ENCODE measurements at regions of chr4 and their contacts with region 1.

Region 1: GRCh38 chr4:88211473-88212252 is 53.2 kb upstream of the ABCG2 start:
- DNase-seq: peak; percentile 45
- H3K4me3 ChIP-seq: no peak overlapping the region
- H3K27ac ChIP-seq: no peak overlapping the region
- H3K4me1 ChIP-seq: no peaks in the 10 kb centered on the region
- H3K27me3 ChIP-seq: no peaks in the 10 kb centered on the region
- CTCF ChIP-seq: peak; percentile 59 to 66

Region 2: DNA sequence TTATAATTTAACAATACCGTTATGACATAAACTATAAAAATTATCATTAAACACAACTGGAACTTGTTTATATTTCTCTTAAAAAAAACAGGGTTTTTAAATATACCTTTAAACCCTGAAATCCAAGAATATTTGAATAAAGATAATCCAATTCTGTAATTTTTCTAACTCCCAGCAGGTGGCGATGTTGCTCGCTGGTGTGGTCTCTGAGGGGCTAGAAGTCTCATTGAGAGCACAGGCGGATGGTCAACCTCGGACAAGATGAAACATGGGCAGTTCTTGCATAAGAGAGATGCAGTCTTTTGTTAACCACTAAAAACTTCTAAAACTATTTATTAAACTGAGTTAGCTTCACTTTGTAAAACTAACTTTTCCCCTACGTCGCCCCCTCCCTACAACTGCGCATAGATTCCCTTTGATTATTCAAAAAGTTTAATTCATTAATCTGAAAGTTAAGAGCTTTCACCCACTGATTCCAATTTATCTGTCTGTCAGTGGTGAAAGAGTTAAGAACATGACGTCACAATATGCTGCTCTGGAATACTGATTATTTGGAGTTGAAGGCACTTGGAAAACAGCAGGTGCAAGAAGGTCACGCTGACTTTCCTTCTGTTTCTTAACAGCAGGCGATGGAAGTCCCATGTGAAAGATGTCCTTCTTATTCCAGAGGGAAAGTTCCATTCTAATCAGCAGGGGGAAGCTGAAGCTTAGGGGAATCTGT is 532.1 kb before region 1 on chr4:
- CTCF ChIA-PET with region 1: no interaction called
- dilution Hi-C with region 1: no loop called
- in situ Hi-C with region 1: no loop called
- intact Hi-C with region 1: loop called (anchors 10 kb)
- DNase-seq: peak; percentile 3
- H3K4me3 ChIP-seq: no peak overlapping the region
- H3K27ac ChIP-seq: no peak overlapping the region
- H3K4me1 ChIP-seq: no peaks in the 10 kb centered on the region
- H3K27me3 ChIP-seq: no peaks in the 10 kb centered on the region
- CTCF ChIP-seq: peak; percentile 73 to 79

Region 3: GRCh38 chr4:87973283-87974169 is 238.1 kb before region 1 on chr4:
- CTCF ChIA-PET with region 1: interaction called, 8 read pairs
- dilution Hi-C with region 1: no loop called
- in situ Hi-C with region 1: no loop called
- intact Hi-C with region 1: loop called (anchors 5 kb)
- DNase-seq: peak; percentile 79
- H3K4me3 ChIP-seq: peak overlapping the region; percentile 12 to 30 (median 23)
- H3K27ac ChIP-seq: peak overlapping the region; percentile 41
- H3K4me1 ChIP-seq: peaks cover 17% of the 10 kb centered on the region
- H3K27me3 ChIP-seq: no peaks in the 10 kb centered on the region
- CTCF ChIP-seq: peak; percentile 75 to 82

Region 4: DNA sequence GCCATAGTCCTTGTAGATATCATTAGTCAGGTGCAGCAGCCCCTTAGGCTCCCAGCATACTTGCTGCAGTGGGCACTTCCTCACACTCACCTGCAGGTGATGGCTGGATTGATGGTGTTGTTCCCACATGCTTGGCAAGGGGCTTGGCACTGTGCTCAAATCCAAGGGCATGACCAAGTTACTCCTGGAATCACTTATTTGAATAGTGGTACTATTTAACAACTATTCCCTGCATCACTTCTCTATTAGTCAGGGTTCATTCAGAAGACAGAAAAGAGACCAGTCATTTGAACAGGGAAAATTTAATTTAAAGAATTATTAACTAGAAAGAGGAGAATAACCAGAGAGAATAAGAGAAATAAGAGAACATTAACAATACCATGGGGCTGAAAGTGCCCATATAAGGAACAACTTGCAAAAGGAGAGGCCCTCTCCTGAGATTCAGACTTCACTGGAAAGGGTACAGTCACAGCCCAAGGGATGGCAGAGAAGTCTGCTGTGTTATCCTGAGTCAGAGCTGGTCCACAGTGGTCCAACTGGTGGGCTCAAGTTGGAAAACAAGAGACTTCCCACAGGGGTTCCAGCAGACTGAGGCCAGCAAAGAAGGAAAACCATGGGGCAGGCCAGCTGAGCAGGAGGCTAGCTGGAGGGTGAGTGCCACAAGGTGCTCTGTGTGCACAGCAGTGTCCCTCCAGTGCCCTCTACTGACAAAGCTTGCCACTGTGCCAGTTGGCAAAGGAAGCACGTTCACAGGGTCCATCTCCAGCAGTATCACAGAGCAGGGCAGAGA is 226.4 kb before region 1 on chr4:
- CTCF ChIA-PET with region 1: no interaction called
- dilution Hi-C with region 1: no loop called
- in situ Hi-C with region 1: no loop called
- intact Hi-C with region 1: loop called (anchors 1 kb)
- DNase-seq: peak; percentile 57
- H3K4me3 ChIP-seq: no peak overlapping the region
- H3K27ac ChIP-seq: no peak overlapping the region
- H3K4me1 ChIP-seq: no peaks in the 10 kb centered on the region
- H3K27me3 ChIP-seq: no peaks in the 10 kb centered on the region
- CTCF ChIP-seq: peak; percentile 85 to 95

Region 5: DNA sequence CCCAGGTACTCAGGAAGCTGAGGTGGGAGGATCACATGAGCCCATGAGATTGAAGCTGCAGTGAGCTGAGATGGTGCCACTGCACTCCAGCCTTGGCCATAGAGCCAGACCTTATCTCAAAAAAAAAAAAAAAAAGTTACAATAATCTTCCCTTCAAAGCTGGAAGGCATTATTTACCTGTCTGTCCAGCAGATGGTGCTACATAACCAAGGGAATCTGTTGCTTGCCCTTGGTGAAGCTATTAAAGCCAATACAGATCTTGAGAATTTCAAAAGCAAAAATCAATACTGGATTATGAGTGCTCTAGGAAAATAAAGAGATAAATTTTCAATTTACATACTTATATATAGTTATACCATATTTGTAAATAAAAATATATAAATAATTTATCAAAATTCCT is 178.4 kb before region 1 on chr4:
- CTCF ChIA-PET with region 1: interaction called, 25 read pairs
- dilution Hi-C with region 1: loop called (anchors 10 kb)
- in situ Hi-C with region 1: no loop called
- intact Hi-C with region 1: loop called (anchors 1 kb)
- DNase-seq: peak; percentile 52
- H3K4me3 ChIP-seq: no peak overlapping the region
- H3K27ac ChIP-seq: no peak overlapping the region
- H3K4me1 ChIP-seq: peaks cover 11% of the 10 kb centered on the region
- H3K27me3 ChIP-seq: no peaks in the 10 kb centered on the region
- CTCF ChIP-seq: peak; percentile 68 to 69

Region 6: GRCh38 chr4:88054901-88055300 is 156.8 kb before region 1 on chr4:
- CTCF ChIA-PET with region 1: interaction called, 5 read pairs
- dilution Hi-C with region 1: no loop called
- in situ Hi-C with region 1: loop called (anchors 10 kb)
- intact Hi-C with region 1: loop called (anchors 1 kb)
- DNase-seq: peak; percentile 39
- H3K4me3 ChIP-seq: no peak overlapping the region
- H3K27ac ChIP-seq: no peak overlapping the region
- H3K4me1 ChIP-seq: no peaks in the 10 kb centered on the region
- H3K27me3 ChIP-seq: no peaks in the 10 kb centered on the region
- CTCF ChIP-seq: peak; percentile 40 to 63

Region 7: DNA sequence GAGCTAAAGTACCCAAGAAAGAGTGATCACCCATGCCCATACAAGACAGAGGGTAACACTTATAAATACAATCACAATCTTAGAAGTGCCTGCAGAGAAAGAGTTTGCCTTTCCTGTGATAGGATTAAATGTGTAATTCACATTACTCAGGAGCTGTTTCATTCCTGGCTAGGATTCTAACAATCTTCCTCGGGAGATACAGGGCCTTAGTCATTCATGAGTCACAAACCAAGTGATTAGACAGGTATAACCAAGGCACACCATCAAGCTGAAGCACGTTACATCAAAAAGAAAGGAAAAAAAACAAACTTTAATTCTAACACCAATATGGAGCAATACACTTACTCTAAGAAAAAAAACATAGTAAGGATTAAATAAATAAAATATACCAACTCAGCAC is 68.2 kb before region 1 on chr4:
- CTCF ChIA-PET with region 1: no interaction called
- dilution Hi-C with region 1: no loop called
- in situ Hi-C with region 1: no loop called
- intact Hi-C with region 1: no loop called
- DNase-seq: peak; percentile 95
- H3K4me3 ChIP-seq: peak overlapping the region in 2 of 3 experiments; percentile 10 to 27
- H3K27ac ChIP-seq: peak overlapping the region; percentile 35
- H3K4me1 ChIP-seq: peaks cover 29% of the 10 kb centered on the region
- H3K27me3 ChIP-seq: no peaks in the 10 kb centered on the region
- CTCF ChIP-seq: no peak

Region 8: GRCh38 chr4:88514557-88515511 is 303.2 kb after region 1 on chr4:
- CTCF ChIA-PET with region 1: no interaction called
- dilution Hi-C with region 1: no loop called
- in situ Hi-C with region 1: loop called (anchors 5 kb)
- intact Hi-C with region 1: no loop called
- DNase-seq: no peak
- H3K4me3 ChIP-seq: no peak overlapping the region
- H3K27ac ChIP-seq: no peak overlapping the region
- H3K4me1 ChIP-seq: no peaks in the 10 kb centered on the region
- H3K27me3 ChIP-seq: no peaks in the 10 kb centered on the region
- CTCF ChIP-seq: no peak

Measured in mammary epithelial cell (primary cell).